ENCODE measurements at regions of chr6 and their contacts with region 1.

Region 1: DNA sequence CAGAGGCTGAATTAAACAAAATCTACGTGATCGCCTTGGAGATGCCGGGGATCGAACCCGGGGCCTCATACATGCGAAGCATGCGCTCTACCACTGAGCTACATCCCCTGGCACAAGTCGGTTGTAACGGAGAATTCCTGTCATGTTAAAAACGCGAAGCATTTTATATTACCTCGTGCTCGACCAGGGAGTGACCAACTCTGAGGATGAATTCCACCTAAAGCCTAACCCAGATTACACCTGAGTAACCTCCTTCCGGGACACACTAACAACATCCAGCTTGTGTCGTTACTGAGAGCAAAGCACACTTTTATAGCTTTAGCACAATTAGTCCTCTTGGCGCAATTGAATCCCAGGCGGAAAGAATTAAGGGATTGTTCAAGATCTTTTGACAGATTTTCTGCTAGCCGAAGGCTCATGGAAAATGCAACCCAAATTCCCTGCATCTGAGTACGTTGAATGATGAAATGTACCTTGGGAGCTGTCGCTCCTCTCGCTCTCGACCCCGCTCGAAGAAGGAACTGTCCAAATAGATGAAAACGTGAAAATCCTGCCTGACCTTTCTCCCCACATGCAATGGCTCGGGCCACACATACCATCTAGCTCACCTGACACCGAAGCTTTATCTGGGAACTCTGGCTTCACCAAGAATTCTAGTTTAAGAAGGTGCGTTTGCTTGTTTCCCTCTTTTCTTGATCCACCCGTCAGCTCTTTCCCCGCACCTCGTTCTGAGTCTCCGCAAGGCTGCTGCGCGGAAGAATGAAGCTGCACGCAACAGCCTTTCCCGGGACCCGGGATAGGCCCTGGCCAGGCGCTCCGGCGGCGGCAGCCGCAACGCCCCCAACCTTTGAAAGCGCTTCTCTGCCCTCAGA is 148.4 kb downstream of the GPX5 start:
- DNase-seq: peak; percentile 67
- ATAC-seq: peak; percentile 85
- H3K4me3 Mint-ChIP-seq: peak overlapping the region; percentile 87
- H3K27ac Mint-ChIP-seq: no peak overlapping the region
- H3K4me1 Mint-ChIP-seq: peaks cover 8% of the 10 kb centered on the region
- H3K27me3 Mint-ChIP-seq: peaks cover 25% of the 10 kb centered on the region
- CTCF ChIP-seq: no peak

Region 2: DNA sequence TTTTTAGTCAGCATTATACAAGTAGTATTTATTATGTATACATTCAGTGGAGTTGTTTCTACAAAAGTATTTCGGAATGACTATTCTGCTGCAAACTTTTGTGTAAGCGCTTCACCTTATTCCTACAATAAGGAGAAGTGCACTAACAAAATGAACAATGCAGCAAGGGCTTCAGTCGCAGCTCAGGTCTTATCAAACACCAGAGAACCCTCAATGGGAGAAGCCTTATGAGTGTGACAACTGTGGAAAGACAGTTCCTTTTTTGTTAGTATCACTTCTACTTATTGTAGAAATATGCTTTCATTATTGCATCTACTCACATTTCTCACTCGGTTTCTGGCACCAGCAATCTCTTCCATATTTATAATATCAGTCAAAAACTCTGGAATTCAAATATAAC is 305.5 kb before region 1 on chr6:
- CTCF ChIA-PET with region 1: no interaction called
- POLR2A ChIA-PET with region 1: no interaction called
- DNase-seq: no peak
- ATAC-seq: no peak
- H3K4me3 Mint-ChIP-seq: no peak overlapping the region
- H3K27ac Mint-ChIP-seq: no peak overlapping the region
- H3K4me1 Mint-ChIP-seq: no peaks in the 10 kb centered on the region
- H3K27me3 Mint-ChIP-seq: no peaks in the 10 kb centered on the region
- CTCF ChIP-seq: no peak

Region 3: GRCh38 chr6:28531479-28532128 is 142.4 kb before region 1 on chr6:
- CTCF ChIA-PET with region 1: interaction called, 12 read pairs
- POLR2A ChIA-PET with region 1: no interaction called
- DNase-seq: no peak
- ATAC-seq: peak; percentile 89
- H3K4me3 Mint-ChIP-seq: 0 out of 2 replicates have a peak overlapping the region, but pooled peaks have one; percentile 4
- H3K27ac Mint-ChIP-seq: peak overlapping the region; percentile 65; the same call in 1 of the 2 replicates
- H3K4me1 Mint-ChIP-seq: peaks cover 23% of the 10 kb centered on the region
- H3K27me3 Mint-ChIP-seq: peaks cover 7% of the 10 kb centered on the region
- CTCF ChIP-seq: no peak

Region 4: DNA sequence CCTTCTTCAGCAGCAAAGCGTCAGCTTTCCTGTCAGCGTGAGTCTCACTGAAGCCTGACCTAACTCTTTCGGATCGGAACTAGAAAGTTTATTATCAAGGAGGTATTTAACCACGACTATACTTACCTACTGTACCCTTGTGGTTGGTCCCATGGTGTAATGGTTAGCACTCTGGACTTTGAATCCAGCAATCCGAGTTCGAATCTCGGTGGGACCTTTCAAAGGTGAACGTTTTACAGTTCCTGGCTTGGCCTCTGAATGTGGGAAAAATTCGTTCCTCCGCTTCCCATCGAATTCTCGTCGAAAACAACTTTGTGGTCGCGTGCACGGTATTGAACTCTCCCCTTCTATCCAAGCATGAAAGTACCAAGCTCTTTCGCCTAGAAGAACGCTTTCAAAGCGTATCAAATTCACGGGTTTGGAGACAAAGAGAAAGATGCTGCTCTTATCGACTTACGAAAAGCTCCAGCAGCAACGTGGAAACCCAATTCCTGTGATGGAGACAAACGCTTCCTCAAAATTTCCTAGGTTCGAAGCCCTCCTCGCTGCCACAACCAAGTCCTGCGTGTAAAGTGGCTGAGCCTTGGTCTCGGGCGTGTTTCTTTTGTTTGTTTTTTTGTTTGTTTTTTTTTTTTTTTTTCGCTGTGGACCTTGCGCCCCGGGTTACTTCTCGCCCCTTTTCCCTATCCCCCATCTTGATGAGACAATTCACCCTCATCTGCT is 84.6 kb before region 1 on chr6:
- CTCF ChIA-PET with region 1: no interaction called
- POLR2A ChIA-PET with region 1: no interaction called
- DNase-seq: peak; percentile 81
- ATAC-seq: peak; percentile 77
- H3K4me3 Mint-ChIP-seq: peak overlapping the region; percentile 91
- H3K27ac Mint-ChIP-seq: peak overlapping the region; percentile 94
- H3K4me1 Mint-ChIP-seq: peaks cover 41% of the 10 kb centered on the region
- H3K27me3 Mint-ChIP-seq: peaks cover 29% of the 10 kb centered on the region
- CTCF ChIP-seq: no peak